ENCODE measurements at regions of chr15 and their contacts with region 1.

Region 1: DNA sequence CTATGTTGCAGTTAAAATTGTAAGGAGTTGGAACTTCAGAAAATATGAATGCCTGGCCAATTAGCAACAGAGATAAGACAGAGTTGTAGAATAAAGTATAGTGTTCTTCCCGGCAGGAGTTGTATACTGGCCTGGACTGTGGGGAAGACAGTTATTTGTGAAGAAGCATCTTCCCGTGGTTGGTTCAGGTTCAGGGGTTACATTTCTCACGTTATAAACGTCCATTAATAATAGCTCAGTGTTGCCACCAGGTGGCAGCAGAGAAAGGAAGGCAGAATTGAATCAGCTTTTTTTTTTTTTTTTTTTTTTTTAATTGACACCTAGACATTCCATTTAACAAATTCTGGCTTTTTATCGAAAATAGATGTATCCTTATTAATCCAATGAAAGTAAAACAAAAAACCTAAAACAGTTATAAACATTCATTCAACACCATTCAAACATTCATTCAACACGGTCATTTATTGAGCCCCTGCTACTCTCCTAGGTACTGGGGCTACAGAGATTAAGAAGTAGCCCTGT is 66.4 kb upstream of the NR2E3 start:
- DNase-seq: peak; percentile 13 to 74 (median 52)
- ATAC-seq: no peak
- H3K4me3 ChIP-seq: no peak overlapping the region
- H3K4me3 Mint-ChIP-seq: no peak overlapping the region
- H3K27ac ChIP-seq: no peak overlapping the region
- H3K27ac Mint-ChIP-seq: no peak overlapping the region
- H3K4me1 ChIP-seq: no peaks in the 10 kb centered on the region
- H3K4me1 Mint-ChIP-seq: no peaks in the 10 kb centered on the region
- H3K27me3 ChIP-seq: no peaks in the 10 kb centered on the region
- H3K27me3 Mint-ChIP-seq: peaks cover 12% of the 10 kb centered on the region
- CTCF ChIP-seq: peak; percentile 93

Region 2: DNA sequence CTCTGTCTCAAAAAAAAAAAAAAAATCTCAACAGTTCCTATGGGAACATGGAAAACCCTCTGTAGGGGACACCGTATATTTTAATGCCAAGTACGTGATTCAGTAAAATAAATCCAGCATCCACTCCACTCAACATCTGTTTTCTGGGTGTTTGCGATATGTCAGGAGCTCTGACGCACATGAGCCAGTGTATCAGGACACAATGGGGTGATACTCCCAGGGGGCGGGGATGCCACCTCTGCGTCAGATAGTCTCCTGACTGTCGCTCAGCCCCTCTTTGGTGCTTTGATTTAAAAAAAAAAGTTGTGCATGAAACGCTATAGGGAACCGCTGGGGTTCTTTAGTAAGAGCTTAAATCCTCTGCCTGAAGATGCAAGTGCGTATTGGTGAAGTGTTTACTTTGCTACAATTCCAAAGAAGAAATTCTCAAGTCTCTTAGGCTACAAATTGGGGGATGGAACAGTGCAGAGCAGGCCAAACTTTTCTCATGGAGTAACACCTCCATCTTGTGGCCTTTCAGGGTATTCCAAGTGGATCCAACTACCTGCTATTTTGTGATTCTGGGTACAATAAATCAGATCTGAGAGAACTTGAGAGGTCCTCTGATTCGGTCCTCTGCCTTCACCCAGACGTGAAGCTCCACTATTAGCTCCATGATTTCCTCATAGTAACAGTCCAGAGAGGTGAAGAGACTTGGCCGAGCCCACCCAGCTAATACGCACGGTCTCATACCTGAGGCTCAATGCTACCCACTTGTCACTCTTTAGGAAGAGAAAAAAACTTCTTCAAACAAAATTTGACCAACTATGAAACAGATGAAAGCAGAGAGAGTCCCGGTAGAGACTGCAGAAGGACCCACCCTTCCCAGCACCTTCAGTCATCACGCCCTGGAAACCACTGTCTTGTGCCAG is 57.2 kb after region 1 on chr15:
- CTCF ChIA-PET with region 1: no interaction called
- POLR2A ChIA-PET with region 1: no interaction called
- intact Hi-C with region 1: loop called (anchors 1 to 5 kb)
- DNase-seq: peak in 3 of 14 experiments; percentile 5 to 34 (median 32)
- ATAC-seq: no peak
- H3K4me3 ChIP-seq: no peak overlapping the region
- H3K4me3 Mint-ChIP-seq: no peak overlapping the region
- H3K27ac ChIP-seq: no peak overlapping the region
- H3K27ac Mint-ChIP-seq: no peak overlapping the region
- H3K4me1 ChIP-seq: no peaks in the 10 kb centered on the region
- H3K4me1 Mint-ChIP-seq: no peaks in the 10 kb centered on the region
- H3K27me3 ChIP-seq: peaks cover 6 to 13% of the 10 kb centered on the region in 2 experiments
- H3K27me3 Mint-ChIP-seq: peaks cover 25% of the 10 kb centered on the region
- CTCF ChIP-seq: no peak

Region 3: GRCh38 chr15:72155635-72156616 is 412.0 kb after region 1 on chr15:
- CTCF ChIA-PET with region 1: interaction called, 22 read pairs
- POLR2A ChIA-PET with region 1: no interaction called
- intact Hi-C with region 1: loop called (anchors 1 kb)
- DNase-seq: peak; percentile 70 to 87 (median 77)
- ATAC-seq: peak; percentile 67
- H3K4me3 ChIP-seq: peak overlapping the region; percentile 43
- H3K4me3 Mint-ChIP-seq: peak overlapping the region; percentile 83
- H3K27ac ChIP-seq: no peak overlapping the region
- H3K27ac Mint-ChIP-seq: no peak overlapping the region
- H3K4me1 ChIP-seq: peaks cover 7% of the 10 kb centered on the region
- H3K4me1 Mint-ChIP-seq: peaks cover 8% of the 10 kb centered on the region
- H3K27me3 ChIP-seq: no peaks in the 10 kb centered on the region
- H3K27me3 Mint-ChIP-seq: no peaks in the 10 kb centered on the region
- CTCF ChIP-seq: peak; percentile 93

Measured in CD4-positive, alpha-beta T cell (primary cell).